ENCODE measurements at regions of chr4 and their contacts with region 1.

Region 1: DNA sequence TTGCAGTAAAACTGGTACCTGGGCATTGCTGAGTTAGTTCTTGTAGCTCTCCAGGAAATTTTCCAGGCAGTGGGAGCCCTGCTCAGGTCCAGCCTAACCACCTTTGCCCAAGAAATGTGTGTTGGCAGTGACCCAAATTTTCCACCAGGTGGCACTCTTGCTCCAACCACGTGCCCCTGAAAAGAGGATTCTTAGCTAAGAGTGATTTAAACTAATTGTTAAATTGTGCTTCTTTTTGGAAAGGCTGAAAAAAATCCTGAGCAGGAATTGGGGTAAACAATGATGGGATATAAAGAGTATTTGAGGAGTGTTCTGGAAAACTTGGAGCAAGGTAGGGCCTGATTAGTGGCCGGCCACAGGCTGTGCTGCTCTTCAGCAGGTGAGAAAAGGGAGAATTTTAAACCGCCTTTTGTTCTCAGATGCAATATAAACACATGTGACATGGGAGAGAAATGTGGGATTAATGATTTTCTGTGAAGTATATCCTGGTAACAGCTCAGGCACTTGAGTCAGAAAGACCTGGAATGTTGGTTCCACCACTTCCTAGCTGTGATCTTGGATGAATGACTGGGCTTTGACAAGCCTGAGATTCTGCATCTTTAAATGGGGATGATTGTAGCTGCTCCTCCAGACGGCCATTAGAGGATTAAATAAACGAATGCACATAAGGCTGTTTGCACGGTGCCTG is 219.6 kb downstream of the PTTG2 start:
- DNase-seq: peak; percentile 66 to 82 (median 71)
- H3K4me3 ChIP-seq: no peak overlapping the region
- H3K27ac ChIP-seq: no peak overlapping the region
- H3K4me1 ChIP-seq: peaks cover 28 to 45% (median 39%) of the 10 kb centered on the region in 4 experiments
- H3K27me3 ChIP-seq: no peaks in the 10 kb centered on the region

Region 2: GRCh38 chr4:38069271-38069760 is 110.5 kb before region 1 on chr4:
- CTCF ChIA-PET with region 1: interaction called, 61 read pairs
- POLR2A ChIA-PET with region 1: no interaction called
- DNase-seq: peak; percentile 55 to 79 (median 65)
- H3K4me3 ChIP-seq: no peak overlapping the region
- H3K27ac ChIP-seq: no peak overlapping the region
- H3K4me1 ChIP-seq: peaks cover 8 to 25% (median 17%) of the 10 kb centered on the region in 4 experiments
- H3K27me3 ChIP-seq: no peaks in the 10 kb centered on the region

Region 3: GRCh38 chr4:38193236-38193863 is 13.5 kb after region 1 on chr4:
- CTCF ChIA-PET with region 1: interaction called, 21 read pairs
- POLR2A ChIA-PET with region 1: no interaction called
- DNase-seq: no peak
- H3K4me3 ChIP-seq: no peak overlapping the region
- H3K27ac ChIP-seq: no peak overlapping the region
- H3K4me1 ChIP-seq: peaks cover 0 to 9% (median under 1%) of the 10 kb centered on the region in 4 experiments
- H3K27me3 ChIP-seq: no peaks in the 10 kb centered on the region

Region 4: DNA sequence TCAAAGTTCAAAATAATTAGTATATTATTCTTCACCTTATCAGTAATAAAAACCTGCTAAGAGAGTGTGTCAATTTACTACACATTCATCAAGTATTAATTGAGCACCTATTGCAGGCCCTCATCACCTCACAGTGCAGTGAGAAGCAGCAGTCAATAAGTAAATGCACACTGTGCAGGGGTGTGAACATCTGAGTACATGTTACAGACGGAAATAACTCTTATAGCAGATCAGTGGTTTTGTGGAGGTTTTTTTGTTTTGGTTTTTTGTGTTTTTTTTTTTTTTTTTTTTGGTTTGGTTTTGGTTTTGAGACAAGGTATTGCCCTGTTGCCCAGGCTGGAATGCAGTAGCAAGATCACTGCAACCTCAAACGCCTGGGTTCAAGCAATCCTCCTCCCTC is 504.4 kb after region 1 on chr4:
- CTCF ChIA-PET with region 1: interaction called, 122 read pairs
- POLR2A ChIA-PET with region 1: no interaction called
- DNase-seq: no peak
- H3K4me3 ChIP-seq: no peak overlapping the region
- H3K27ac ChIP-seq: no peak overlapping the region
- H3K4me1 ChIP-seq: peaks cover 0 to 12% (median 7%) of the 10 kb centered on the region in 4 experiments
- H3K27me3 ChIP-seq: no peaks in the 10 kb centered on the region

Region 5: DNA sequence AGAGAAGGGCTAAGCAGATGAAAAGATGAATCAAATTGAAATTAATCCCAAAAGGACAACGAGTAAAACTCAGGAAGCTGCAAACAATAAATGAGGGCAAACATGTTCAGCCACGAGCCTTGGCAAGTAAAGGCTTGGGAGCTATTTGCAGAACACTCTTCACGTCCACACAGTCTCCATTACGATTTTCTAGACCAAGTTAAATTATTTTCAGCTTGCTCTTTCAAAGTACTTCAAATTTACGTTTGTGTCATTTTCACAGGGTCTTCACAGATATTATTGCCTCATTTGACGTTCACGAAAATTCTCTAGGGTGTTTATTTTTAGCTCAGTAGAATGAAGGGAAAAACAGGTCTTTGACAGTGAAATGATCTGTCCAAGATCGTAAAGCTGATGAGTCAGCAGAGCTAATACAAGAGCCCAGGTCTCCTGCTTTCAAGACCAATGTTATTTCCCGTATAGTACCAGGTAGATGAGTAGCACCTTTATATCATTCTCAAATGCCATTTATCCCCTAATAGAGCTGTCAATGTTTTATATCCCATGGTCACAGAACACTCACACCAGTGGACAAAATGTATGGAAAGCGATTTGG is 1247.8 kb after region 1 on chr4:
- CTCF ChIA-PET with region 1: no interaction called
- POLR2A ChIA-PET with region 1: no interaction called
- DNase-seq: no peak
- H3K4me3 ChIP-seq: no peak overlapping the region
- H3K27ac ChIP-seq: no peak overlapping the region
- H3K4me1 ChIP-seq: no peaks in the 10 kb centered on the region
- H3K27me3 ChIP-seq: no peaks in the 10 kb centered on the region

Measured in common myeloid progenitor, CD34-positive (primary cell).